Lower leg skin (tissue), 4 donors: ENCODE measurements at regions of chr10 and their contacts with region 1.

Region 1: GRCh38 chr10:14254368-14254767 is 76.4 kb downstream of the FRMD4A start:
- DNase-seq: no peak
- H3K4me3 ChIP-seq: no peak overlapping the region
- CTCF ChIP-seq: no peak
- POLR2A ChIP-seq: no peak

Region 2: GRCh38 chr10:14438057-14438456 is 183.7 kb after region 1 on chr10:
- intact Hi-C with region 1: no loop called
- DNase-seq: no peak
- H3K4me3 ChIP-seq: no peak overlapping the region
- CTCF ChIP-seq: no peak
- POLR2A ChIP-seq: no peak

Region 3: GRCh38 chr10:14822879-14823755 is 568.7 kb after region 1 on chr10:
- intact Hi-C with region 1: loop called (anchors 5 kb)
- DNase-seq: no peak
- H3K4me3 ChIP-seq: no peak overlapping the region
- CTCF ChIP-seq: no peak
- POLR2A ChIP-seq: no peak